Right lobe of liver (tissue), 6 donors: ENCODE measurements at regions of chr1 and their contacts with region 1.

Region 1: GRCh38 chr1:77978969-77979876 is at the start of gene FUBP1:
- DNase-seq: peak; percentile 92 to 95 (median 93)
- ATAC-seq: peak; percentile 88 to 94 (median 90)
- H3K4me3 ChIP-seq: peak within 1 kb of the TSS; percentile 66 to 74 (median 69)
- H3K27ac ChIP-seq: peak within 1 kb of the TSS; percentile 94 to 97 (median 96)
- H3K4me1 ChIP-seq: peaks cover 0 to 34% (median 13%) of the 10 kb centered on the region in 4 donors
- H3K27me3 ChIP-seq: no peaks in the 10 kb centered on the region
- CTCF ChIP-seq: peak; percentile 66 to 76 (median 72)
- POLR2A ChIP-seq: peak; percentile 83
- total RNA-seq, gene FUBP1: 21.7 to 38.5 (median 35.6) TPM

Region 2: DNA sequence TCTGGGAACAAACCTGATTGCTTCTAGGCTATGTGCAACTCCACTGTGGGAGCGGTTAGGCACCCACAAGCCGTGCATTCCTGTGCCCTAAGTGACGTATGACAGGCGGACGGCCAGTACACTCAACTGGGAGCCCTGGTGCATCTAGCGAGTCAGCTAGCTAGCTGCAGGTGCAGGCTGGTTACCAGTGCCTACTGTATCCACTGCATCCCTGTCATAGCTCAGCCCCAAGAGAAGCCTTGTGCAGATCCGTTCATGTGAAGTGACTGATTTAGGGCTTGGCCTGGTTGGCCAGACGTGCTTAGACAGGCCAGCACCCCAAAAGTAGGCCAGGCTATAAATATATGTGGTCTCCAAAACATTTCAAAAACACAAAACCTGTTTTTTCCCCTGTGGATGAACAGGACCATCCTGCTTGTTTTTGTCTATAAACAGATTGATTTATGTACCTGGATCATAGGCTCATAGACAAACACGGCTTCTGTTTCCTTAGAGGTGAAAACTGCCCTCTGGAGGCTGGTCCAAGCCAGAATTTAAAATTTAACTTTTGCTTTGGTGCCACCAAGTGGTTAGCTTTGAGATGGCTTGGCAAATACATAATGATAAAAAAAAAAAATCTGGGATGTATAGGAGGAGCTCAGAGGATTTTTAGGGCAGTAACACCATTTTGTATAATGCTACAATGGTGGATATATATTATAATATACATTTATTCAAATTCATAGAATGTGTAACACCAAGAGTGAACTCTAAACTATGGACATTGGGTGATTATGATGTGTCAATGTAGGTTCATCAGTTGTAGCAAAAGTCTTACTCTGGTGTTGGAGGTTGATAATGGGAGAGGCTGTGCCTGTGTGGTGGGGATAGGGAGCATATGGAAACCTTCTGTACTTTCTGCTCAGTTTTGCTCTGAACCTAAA is 135.1 kb after region 1 on chr1:
- intact Hi-C with region 1: loop called (anchors 10 kb)
- DNase-seq: peak in 1 of 3 donors; percentile 53
- ATAC-seq: peak; percentile 97 to 99 (median 98)
- H3K4me3 ChIP-seq: no peak overlapping the region
- H3K27ac ChIP-seq: peak overlapping the region in 1 of 3 donors; percentile 9
- H3K4me1 ChIP-seq: no peaks in the 10 kb centered on the region
- H3K27me3 ChIP-seq: no peaks in the 10 kb centered on the region
- CTCF ChIP-seq: peak; percentile 83 to 93 (median 87)
- POLR2A ChIP-seq: no peak

Region 3: DNA sequence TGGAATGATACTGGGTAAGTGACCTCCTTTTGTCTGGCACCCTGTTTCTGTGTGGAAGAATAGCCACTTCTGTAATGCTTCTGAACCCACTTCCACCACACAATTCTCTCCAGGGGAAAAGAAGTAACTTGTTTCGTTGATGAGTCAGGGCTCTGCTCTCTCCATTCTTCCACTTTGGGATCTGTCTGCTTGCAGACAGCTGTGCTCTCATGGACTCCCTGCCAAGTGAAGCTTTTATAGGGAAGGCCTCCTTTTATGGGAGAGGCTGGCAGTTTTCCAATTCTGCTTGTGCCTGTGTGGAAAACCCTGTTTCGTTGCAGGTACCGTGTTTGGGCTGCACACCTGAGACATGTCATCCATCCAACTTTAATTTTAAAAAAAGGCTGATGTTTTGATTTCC is 197.2 kb after region 1 on chr1:
- intact Hi-C with region 1: no loop called
- DNase-seq: no peak
- ATAC-seq: no peak
- H3K4me3 ChIP-seq: no peak overlapping the region
- H3K27ac ChIP-seq: no peak overlapping the region
- H3K4me1 ChIP-seq: no peaks in the 10 kb centered on the region
- H3K27me3 ChIP-seq: no peaks in the 10 kb centered on the region
- CTCF ChIP-seq: no peak
- POLR2A ChIP-seq: no peak